Activated T-helper 1 cell treated with anti-CD3 and anti-CD28 coated beads, Interleukin-12 subunit alpha, Interleukin-12 subunit beta, Interleukin-2, Interleukin-4 antibody, amounts not matched to agents 30 ng/mL and 10 ng/mL and 1 ng/mL, durations not matched to agents 14 hours and 24 hours and 36 hours (primary cell): ENCODE measurements at regions of chr2 and their contacts with region 1.

Region 1: GRCh38 chr2:46229134-46230063 is 67.8 kb upstream of the EPAS1 start:
- DNase-seq: peak; percentile 38
- H3K4me3 Mint-ChIP-seq: peak overlapping the region; percentile 53
- H3K27ac Mint-ChIP-seq: peak overlapping the region; percentile 90
- H3K4me1 Mint-ChIP-seq: peaks cover 56% of the 10 kb centered on the region
- H3K27me3 Mint-ChIP-seq: peaks cover 9% of the 10 kb centered on the region

Region 2: DNA sequence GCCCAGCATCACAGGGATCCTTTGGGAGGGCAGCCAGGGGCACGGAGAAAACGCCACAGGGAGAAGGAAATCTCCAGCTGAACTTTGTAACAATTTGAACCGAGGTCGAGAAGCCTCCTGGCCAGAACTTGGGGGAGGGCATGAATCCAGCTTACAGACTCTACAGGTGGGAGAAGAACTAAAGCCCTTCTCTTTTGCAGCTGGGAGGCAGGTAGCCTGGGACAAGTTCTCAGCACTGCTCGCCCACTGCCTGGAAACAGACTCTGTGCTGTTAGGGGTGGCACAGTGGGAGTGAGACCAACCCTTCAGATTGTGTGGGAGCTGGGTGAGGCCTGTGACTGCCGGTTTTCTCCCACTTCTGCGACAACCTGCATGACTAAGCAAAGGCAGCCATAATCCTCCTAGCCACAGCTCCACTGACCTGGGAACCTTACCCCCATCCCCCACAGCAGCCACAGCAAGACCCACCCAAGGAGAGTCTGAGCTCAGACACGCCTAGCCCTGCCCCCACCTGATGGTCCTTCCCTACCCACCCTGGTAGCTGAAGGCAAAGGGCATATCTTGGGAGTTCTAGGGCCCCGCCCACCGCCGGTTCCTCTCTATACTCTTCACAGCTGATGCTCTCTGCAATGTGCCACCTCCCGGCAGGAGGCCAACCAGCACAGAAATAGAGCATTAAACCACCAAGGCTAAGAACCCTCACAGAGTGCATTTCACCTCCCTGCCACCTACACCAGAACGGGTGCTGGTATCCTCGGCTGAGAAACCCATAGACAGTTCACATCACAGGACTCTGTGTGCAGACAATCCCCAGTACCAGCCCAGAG is 1084.1 kb before region 1 on chr2:
- intact Hi-C with region 1: no loop called
- DNase-seq: no peak
- H3K4me3 Mint-ChIP-seq: no peak overlapping the region
- H3K27ac Mint-ChIP-seq: no peak overlapping the region
- H3K4me1 Mint-ChIP-seq: no peaks in the 10 kb centered on the region
- H3K27me3 Mint-ChIP-seq: peaks cover 29% of the 10 kb centered on the region

Region 3: GRCh38 chr2:46050489-46050888 is 178.9 kb before region 1 on chr2:
- intact Hi-C with region 1: no loop called
- DNase-seq: no peak
- H3K4me3 Mint-ChIP-seq: no peak overlapping the region
- H3K27ac Mint-ChIP-seq: no peak overlapping the region
- H3K4me1 Mint-ChIP-seq: peaks cover 28% of the 10 kb centered on the region
- H3K27me3 Mint-ChIP-seq: no peaks in the 10 kb centered on the region

Region 4: GRCh38 chr2:46239847-46240181 is 10.4 kb after region 1 on chr2:
- intact Hi-C with region 1: loop called (anchors 1 kb)
- DNase-seq: peak; percentile 61
- H3K4me3 Mint-ChIP-seq: peak overlapping the region; percentile 6
- H3K27ac Mint-ChIP-seq: peak overlapping the region; percentile 89
- H3K4me1 Mint-ChIP-seq: peaks cover 49% of the 10 kb centered on the region
- H3K27me3 Mint-ChIP-seq: peaks cover 3% of the 10 kb centered on the region